CD8-positive, alpha-beta memory T cell (primary cell): ENCODE measurements at regions of chr19 and their contacts with region 1.

Region 1: DNA sequence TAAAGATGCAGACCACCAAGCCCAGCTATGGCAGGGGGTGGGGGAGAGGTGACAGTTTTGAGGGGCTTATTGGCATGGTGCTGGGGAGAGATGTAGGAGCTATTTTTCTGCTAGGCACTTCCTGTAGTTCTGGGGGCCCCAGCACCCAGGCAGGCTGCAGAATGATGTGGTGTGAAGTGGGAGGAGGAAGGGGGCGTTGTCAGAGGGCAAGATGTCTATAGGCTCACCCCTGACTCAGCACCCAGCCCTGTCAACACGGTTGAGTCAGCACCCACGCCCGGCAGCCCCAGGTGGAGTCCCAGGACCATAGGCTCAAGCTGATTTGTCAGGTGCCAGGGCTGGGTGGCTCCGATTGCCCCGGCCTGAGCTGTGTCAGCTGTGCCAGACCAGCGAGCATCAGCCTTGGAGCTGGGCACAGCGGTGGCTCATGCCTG is 5.8 kb downstream of the KLF2 start:
- DNase-seq: peak; percentile 92 to 98 (median 92)
- H3K4me3 ChIP-seq: peak overlapping the region; percentile 29
- H3K4me3 Mint-ChIP-seq: peak overlapping the region; percentile 90 to 100 (median 100)
- H3K27ac ChIP-seq: peak overlapping the region; percentile 100
- H3K27ac Mint-ChIP-seq: peak overlapping the region; percentile 90 to 99 (median 98)
- H3K4me1 ChIP-seq: peaks cover 39% of the 10 kb centered on the region
- H3K4me1 Mint-ChIP-seq: peaks cover 49 to 62% (median 52%) of the 10 kb centered on the region in 3 donors
- H3K27me3 ChIP-seq: no peaks in the 10 kb centered on the region
- H3K27me3 Mint-ChIP-seq: peaks cover 0 to 36% of the 10 kb centered on the region in 2 donors

Region 2: DNA sequence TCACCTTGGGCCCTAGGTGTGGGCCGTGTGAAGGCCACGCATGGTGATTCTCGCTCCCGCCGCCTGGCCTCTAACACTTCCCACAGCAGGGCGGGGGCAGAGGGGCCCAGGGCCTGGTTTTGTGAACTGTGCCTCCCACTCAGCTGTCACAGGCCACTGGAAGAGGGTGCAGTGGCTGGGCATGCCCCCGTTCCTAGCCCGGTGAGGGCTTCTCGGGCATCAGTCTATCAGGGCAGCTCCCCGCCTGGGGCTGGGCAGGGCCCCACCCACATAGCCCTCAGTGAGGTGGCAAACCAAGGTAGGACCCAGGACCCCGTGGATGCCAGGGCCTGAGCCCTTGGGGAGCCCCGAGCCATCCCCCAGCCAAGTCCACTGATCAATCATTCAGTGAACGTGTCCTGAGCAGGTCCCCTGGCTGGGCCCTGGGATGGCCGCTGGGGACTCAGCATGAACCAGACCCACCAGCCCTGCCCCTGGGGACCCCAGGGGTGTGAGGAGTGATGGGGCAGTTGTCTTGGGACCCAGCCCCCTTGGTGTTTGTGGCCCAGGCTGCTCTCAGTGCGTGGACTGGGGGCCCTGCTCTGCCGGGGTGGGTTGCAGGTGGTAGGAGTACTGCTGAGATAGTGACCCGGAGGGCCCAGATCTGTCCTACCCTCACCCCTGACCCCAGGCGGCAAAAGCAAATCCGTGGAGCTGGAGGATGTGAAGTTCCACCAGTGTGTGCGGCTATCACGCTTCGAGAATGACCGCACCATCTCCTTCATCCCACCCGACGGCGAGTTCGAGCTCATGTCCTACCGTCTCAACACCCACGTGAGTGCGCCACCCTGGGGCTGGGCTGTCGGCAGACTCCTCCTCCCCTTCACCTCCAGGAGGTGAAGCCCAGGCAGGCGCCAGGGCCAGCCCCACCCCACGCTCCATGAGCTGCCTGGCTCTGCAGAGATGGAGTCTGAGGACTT is 103.2 kb before region 1 on chr19:
- CTCF ChIA-PET with region 1: no interaction called
- POLR2A ChIA-PET with region 1: no interaction called
- DNase-seq: no peak
- H3K4me3 ChIP-seq: no peak overlapping the region
- H3K4me3 Mint-ChIP-seq: no peak overlapping the region
- H3K27ac ChIP-seq: no peak overlapping the region
- H3K27ac Mint-ChIP-seq: no peak overlapping the region
- H3K4me1 ChIP-seq: no peaks in the 10 kb centered on the region
- H3K4me1 Mint-ChIP-seq: no peaks in the 10 kb centered on the region
- H3K27me3 ChIP-seq: no peaks in the 10 kb centered on the region
- H3K27me3 Mint-ChIP-seq: no peaks in the 10 kb centered on the region

Region 3: GRCh38 chr19:16283210-16284061 is 46.9 kb before region 1 on chr19:
- CTCF ChIA-PET with region 1: no interaction called
- POLR2A ChIA-PET with region 1: no interaction called
- DNase-seq: peak in 3 of 5 donors; percentile 34 to 74 (median 55)
- H3K4me3 ChIP-seq: peak overlapping the region; percentile 41
- H3K4me3 Mint-ChIP-seq: peak overlapping the region in 6 of 7 donors; percentile 16 to 71 (median 60)
- H3K27ac ChIP-seq: peak overlapping the region; percentile 16
- H3K27ac Mint-ChIP-seq: peak overlapping the region in 5 of 8 donors; percentile 29 to 77 (median 74)
- H3K4me1 ChIP-seq: peaks cover 27% of the 10 kb centered on the region
- H3K4me1 Mint-ChIP-seq: peaks cover 22 to 34% (median 25%) of the 10 kb centered on the region in 3 donors
- H3K27me3 ChIP-seq: no peaks in the 10 kb centered on the region
- H3K27me3 Mint-ChIP-seq: peaks cover 6 to 9% of the 10 kb centered on the region in 2 donors

Region 4: GRCh38 chr19:16376649-16377048 is 46.3 kb after region 1 on chr19:
- CTCF ChIA-PET with region 1: interaction called, 403 read pairs
- POLR2A ChIA-PET with region 1: interaction called, 1,176 read pairs
- DNase-seq: peak in 1 of 5 donors; percentile 48
- H3K4me3 ChIP-seq: no peak overlapping the region
- H3K4me3 Mint-ChIP-seq: peak overlapping the region in 2 of 7 donors; percentile 67
- H3K27ac ChIP-seq: no peak overlapping the region
- H3K27ac Mint-ChIP-seq: peak overlapping the region in 6 of 8 donors; percentile 33 to 95 (median 73)
- H3K4me1 ChIP-seq: peaks cover 93% of the 10 kb centered on the region
- H3K4me1 Mint-ChIP-seq: peaks cover 46 to 62% (median 48%) of the 10 kb centered on the region in 3 donors
- H3K27me3 ChIP-seq: no peaks in the 10 kb centered on the region
- H3K27me3 Mint-ChIP-seq: no peaks in the 10 kb centered on the region

Region 5: GRCh38 chr19:16637535-16637934 is 307.1 kb after region 1 on chr19:
- CTCF ChIA-PET with region 1: no interaction called
- POLR2A ChIA-PET with region 1: interaction called, 10 read pairs
- DNase-seq: no peak
- H3K4me3 ChIP-seq: no peak overlapping the region
- H3K4me3 Mint-ChIP-seq: no peak overlapping the region
- H3K27ac ChIP-seq: no peak overlapping the region
- H3K27ac Mint-ChIP-seq: peak overlapping the region in 4 of 8 donors; percentile 17 to 88 (median 34)
- H3K4me1 ChIP-seq: no peaks in the 10 kb centered on the region
- H3K4me1 Mint-ChIP-seq: peaks cover 13 to 26% (median 18%) of the 10 kb centered on the region in 3 donors
- H3K27me3 ChIP-seq: no peaks in the 10 kb centered on the region
- H3K27me3 Mint-ChIP-seq: no peaks in the 10 kb centered on the region